GM12878 (cell line): ENCODE measurements at regions of chr6 and their contacts with region 1.

Region 1: DNA sequence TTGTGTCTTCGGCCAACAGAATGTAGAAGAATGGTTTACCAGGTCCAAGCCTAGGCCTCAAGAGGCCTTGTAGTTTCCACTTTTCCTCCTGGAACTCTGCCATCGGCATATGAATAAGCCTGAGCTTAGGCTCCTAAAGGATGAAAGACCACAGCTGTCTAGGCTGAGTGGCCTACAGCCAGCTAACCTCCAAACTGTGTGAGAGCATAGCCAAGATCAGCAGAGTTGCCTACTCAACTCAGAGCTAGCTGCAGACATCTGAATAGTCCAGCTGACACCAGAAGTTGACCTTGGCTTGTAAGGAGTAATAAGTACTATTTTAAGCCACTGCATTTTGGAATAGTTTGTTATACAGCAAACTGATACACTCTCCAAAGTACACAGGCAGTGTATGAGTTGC is 52.6 kb upstream of the SMIM29 start:
- DNase-seq: no peak
- ATAC-seq: no peak
- H3K4me3 ChIP-seq: no peak overlapping the region
- H3K27ac ChIP-seq: peak overlapping the region; percentile 49; the same call in 1 of the 2 replicates
- H3K4me1 ChIP-seq: peaks cover 39% of the 10 kb centered on the region
- H3K27me3 ChIP-seq: no peaks in the 10 kb centered on the region
- CTCF ChIP-seq: no peak
- EP300 ChIP-seq: no peak
- POLR2A ChIP-seq: no peak
- RAD21 ChIP-seq: no peak

Region 2: GRCh38 chr6:33161354-33162331 is 1139.8 kb before region 1 on chr6:
- CTCF ChIA-PET with region 1: no interaction called
- POLR2A ChIA-PET with region 1: no interaction called
- RAD21 ChIA-PET with region 1: no interaction called
- SMC1A ChIA-PET with region 1: no interaction called
- in situ Hi-C with region 1: no loop called
- intact Hi-C with region 1: no loop called
- DNase-seq: no peak
- ATAC-seq: peak; percentile 96
- H3K4me3 ChIP-seq: peak overlapping the region; percentile 70; the same call in 1 of the 2 replicates
- H3K27ac ChIP-seq: no peak overlapping the region
- H3K4me1 ChIP-seq: peaks cover 4% of the 10 kb centered on the region
- H3K27me3 ChIP-seq: no peaks in the 10 kb centered on the region
- CTCF ChIP-seq: peak; percentile 89 to 97 (median 96); a peak in 5 of 6 replicates
- EP300 ChIP-seq: no peak
- POLR2A ChIP-seq: no peak
- RAD21 ChIP-seq: peak; percentile 64

Region 3: GRCh38 chr6:34242252-34243130 is 58.9 kb before region 1 on chr6:
- CTCF ChIA-PET with region 1: no interaction called
- POLR2A ChIA-PET with region 1: no interaction called
- RAD21 ChIA-PET with region 1: no interaction called
- SMC1A ChIA-PET with region 1: no interaction called
- in situ Hi-C with region 1: no loop called
- intact Hi-C with region 1: no loop called
- DNase-seq: no peak
- ATAC-seq: no peak
- H3K4me3 ChIP-seq: no peak overlapping the region
- H3K27ac ChIP-seq: no peak overlapping the region
- H3K4me1 ChIP-seq: peaks cover 18% of the 10 kb centered on the region
- H3K27me3 ChIP-seq: no peaks in the 10 kb centered on the region
- CTCF ChIP-seq: no peak
- EP300 ChIP-seq: no peak
- POLR2A ChIP-seq: no peak
- RAD21 ChIP-seq: no peak

Region 4: GRCh38 chr6:34332251-34333198 is 31.1 kb after region 1 on chr6:
- CTCF ChIA-PET with region 1: interaction called, 4 read pairs
- POLR2A ChIA-PET with region 1: interaction called, 3 read pairs
- RAD21 ChIA-PET with region 1: interaction called, 13 read pairs
- SMC1A ChIA-PET with region 1: interaction called, 7 read pairs
- in situ Hi-C with region 1: no loop called
- intact Hi-C with region 1: no loop called
- DNase-seq: no peak
- ATAC-seq: peak; percentile 81
- H3K4me3 ChIP-seq: no peak overlapping the region
- H3K27ac ChIP-seq: peak overlapping the region; percentile 65
- H3K4me1 ChIP-seq: peaks cover 26% of the 10 kb centered on the region
- H3K27me3 ChIP-seq: no peaks in the 10 kb centered on the region
- CTCF ChIP-seq: no peak
- EP300 ChIP-seq: no peak
- POLR2A ChIP-seq: no peak
- RAD21 ChIP-seq: no peak

Region 5: DNA sequence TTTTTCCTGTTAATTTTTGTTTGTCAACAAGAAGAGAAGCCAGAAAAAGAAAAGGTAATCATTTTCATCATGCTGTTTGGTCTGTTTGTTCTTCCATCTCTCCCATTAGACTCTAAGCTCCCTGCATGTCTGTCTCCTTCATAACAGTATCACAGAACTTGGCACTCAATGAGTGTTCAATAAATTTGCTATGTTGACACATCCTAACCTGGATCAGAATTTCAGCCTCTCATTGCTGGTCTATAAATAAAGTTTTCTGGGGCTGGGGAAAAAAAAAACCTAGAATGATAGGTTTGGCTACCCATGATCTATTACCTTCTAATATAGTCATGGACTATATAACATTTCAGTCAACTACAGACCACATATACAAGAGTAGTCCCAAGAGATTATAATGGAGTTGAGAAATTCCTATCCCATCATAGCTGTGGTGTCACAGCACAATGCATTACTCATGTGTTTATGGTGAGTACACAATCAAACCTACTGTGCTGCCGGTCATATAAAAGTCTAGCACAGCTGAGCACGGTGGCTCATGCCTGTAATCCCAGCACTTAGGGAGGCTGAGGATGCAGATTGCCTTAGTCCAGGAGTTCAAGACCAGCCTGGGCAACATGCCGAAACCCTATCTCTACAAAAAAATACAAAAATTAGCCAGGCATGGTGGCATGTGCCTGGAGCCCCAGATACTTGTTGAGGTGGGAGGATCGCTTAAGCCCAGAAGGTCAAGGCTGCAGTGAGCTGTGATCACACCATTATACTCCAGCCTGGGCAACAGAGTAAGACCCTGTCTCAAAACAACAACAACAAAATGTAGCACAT is 85.1 kb after region 1 on chr6:
- CTCF ChIA-PET with region 1: interaction called, 5 read pairs
- POLR2A ChIA-PET with region 1: interaction called, 3 read pairs
- RAD21 ChIA-PET with region 1: interaction called, 3 read pairs
- SMC1A ChIA-PET with region 1: interaction called, 15 read pairs
- in situ Hi-C with region 1: no loop called
- intact Hi-C with region 1: loop called (anchors 5 kb)
- DNase-seq: no peak
- ATAC-seq: peak; percentile 14
- H3K4me3 ChIP-seq: no peak overlapping the region
- H3K27ac ChIP-seq: no peak overlapping the region
- H3K4me1 ChIP-seq: no peaks in the 10 kb centered on the region
- H3K27me3 ChIP-seq: no peaks in the 10 kb centered on the region
- CTCF ChIP-seq: no peak
- EP300 ChIP-seq: no peak
- POLR2A ChIP-seq: no peak
- RAD21 ChIP-seq: no peak